Caco-2 (cell line): ENCODE measurements at regions of chr7 and their contacts with region 1.

Region 1: DNA sequence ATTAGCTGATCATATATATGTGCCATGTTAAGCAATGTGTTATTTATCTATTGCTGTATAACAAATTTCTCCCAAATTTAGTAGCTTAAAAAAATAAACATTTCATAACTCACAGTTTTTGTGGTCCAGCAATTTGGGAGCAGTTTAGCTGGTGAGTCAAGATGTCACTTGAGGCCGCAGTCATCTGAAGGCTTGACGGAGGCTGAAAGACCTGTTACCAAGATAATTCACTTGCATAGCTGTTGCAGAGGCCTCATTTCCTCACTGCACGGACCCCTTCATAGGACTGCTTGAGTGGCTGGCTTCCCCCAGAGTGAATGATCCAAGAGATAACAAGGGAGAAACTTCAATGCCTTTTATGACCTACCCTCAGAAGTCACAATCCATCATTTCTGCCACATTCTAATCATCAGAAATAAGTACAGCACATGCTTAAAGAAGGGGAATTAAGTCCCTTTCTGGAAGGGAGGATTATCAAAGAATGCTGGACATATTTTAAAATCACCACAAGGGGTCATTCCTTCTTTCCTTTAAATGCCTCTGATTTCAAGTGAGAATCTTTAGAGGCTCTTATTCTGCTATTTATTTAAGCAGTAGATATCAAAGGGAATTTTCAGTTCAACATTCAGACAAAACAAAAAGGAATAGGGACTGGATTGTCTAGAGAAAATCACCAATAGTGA is 10.5 kb upstream of the SRPK2 start:
- DNase-seq: no peak
- H3K4me3 ChIP-seq: no peak overlapping the region
- H3K4me3 Mint-ChIP-seq: no peak overlapping the region
- H3K27ac Mint-ChIP-seq: no peak overlapping the region
- H3K4me1 ChIP-seq: no peaks in the 10 kb centered on the region
- H3K4me1 Mint-ChIP-seq: peaks cover 7% of the 10 kb centered on the region
- H3K27me3 ChIP-seq: no peaks in the 10 kb centered on the region
- H3K27me3 Mint-ChIP-seq: no peaks in the 10 kb centered on the region
- CTCF ChIP-seq: peak in 1 of 2 experiments; percentile 25

Region 2: GRCh38 chr7:105187302-105188169 is 211.6 kb before region 1 on chr7:
- CTCF ChIA-PET with region 1: no interaction called
- POLR2A ChIA-PET with region 1: no interaction called
- intact Hi-C with region 1: no loop called
- DNase-seq: no peak
- H3K4me3 ChIP-seq: no peak overlapping the region
- H3K4me3 Mint-ChIP-seq: no peak overlapping the region
- H3K27ac Mint-ChIP-seq: no peak overlapping the region
- H3K4me1 ChIP-seq: no peaks in the 10 kb centered on the region
- H3K4me1 Mint-ChIP-seq: no peaks in the 10 kb centered on the region
- H3K27me3 ChIP-seq: no peaks in the 10 kb centered on the region
- H3K27me3 Mint-ChIP-seq: no peaks in the 10 kb centered on the region
- CTCF ChIP-seq: no peak

Region 3: DNA sequence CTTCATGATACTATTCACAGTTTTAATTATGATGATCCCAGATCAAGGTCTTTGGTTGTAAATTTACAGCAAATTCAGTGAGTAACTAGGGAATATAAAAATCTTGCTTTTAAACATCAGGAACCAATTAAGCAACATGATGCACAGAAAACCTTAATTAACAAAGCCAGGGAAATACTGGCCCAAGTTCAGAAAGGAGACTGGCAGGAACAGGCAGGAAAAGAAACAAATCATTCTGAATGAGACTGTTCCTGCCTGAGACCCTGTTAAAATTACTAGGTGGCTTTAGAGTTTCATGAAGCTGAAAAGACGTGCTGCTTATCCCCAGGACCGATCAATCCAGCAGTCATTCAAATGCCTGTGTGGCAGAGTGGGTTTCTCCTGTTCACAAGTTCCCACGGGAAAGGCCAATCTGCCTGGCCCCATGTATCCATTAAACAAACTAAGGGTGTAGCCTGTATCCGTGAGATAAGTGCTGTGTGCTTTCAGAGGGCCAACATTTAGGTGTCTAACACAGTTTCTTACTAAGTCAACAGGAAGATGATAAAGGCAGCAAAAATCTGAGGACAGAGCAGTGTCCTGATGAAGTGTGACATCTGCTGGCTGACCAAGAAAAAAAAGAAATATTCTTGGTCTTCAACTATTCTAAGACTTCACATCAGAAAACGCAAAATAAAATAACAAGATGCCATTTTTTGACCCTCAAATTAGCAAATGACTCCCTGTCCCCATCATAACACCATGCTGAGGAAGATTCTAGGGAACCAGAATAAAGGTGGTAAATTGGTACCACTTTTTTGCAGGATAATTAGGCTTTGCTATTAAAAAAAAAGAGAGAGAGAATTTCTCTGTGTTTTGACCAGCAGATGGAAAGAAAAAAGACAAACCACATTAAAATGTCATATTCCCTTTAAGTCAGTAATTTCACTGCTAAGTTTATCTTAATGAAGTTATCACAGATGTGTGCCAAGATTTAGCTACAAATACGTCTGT is 88.7 kb after region 1 on chr7:
- CTCF ChIA-PET with region 1: no interaction called
- POLR2A ChIA-PET with region 1: no interaction called
- intact Hi-C with region 1: loop called (anchors 1 kb)
- DNase-seq: peak; percentile 48 to 54
- H3K4me3 ChIP-seq: no peak overlapping the region
- H3K4me3 Mint-ChIP-seq: no peak overlapping the region
- H3K27ac Mint-ChIP-seq: no peak overlapping the region
- H3K4me1 ChIP-seq: peaks cover 13% of the 10 kb centered on the region; the same call in 1 of the 2 replicates
- H3K4me1 Mint-ChIP-seq: peaks cover 6% of the 10 kb centered on the region
- H3K27me3 ChIP-seq: no peaks in the 10 kb centered on the region
- H3K27me3 Mint-ChIP-seq: no peaks in the 10 kb centered on the region
- CTCF ChIP-seq: peak; percentile 38 to 57